BJ (cell line): ENCODE measurements at regions of chr4 and their contacts with region 1.

Region 1: DNA sequence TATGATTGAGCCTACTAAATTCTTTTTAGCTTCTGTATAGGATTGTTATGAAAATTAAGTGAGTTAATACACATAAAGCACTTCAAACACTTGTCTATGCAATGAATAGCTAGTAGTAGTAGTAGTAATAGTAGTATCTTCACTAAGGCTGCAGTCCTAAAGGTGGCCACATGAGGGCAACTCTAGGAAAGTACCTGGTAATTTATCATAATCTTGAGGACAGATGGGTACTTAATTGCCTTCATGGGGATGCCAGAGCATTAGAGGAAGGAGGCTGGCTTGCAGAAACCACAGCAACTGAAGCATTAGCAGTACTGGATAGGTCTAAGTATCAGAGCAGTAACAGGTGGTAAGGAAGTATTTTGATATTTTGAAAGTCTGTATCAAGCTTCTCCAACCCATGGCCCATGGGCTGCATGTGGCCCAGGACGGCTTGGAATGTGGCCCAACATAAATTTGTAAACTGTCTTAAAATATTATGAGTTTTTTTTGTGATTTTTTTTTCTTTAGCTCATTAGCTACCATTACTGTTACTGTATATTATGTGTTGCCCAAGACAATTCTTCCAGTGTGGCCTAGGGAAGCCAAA is 17.3 kb downstream of the NIPAL1 start:
- DNase-seq: no peak
- H3K4me3 ChIP-seq: no peak overlapping the region
- H3K27me3 ChIP-seq: no peaks in the 10 kb centered on the region
- CTCF ChIP-seq: peak; percentile 60; the same call in 1 of the 2 replicates

Region 2: GRCh38 chr4:47876784-47877546 is 157.0 kb before region 1 on chr4:
- CTCF ChIA-PET with region 1: no interaction called
- POLR2A ChIA-PET with region 1: no interaction called
- DNase-seq: no peak
- H3K4me3 ChIP-seq: no peak overlapping the region
- H3K27me3 ChIP-seq: no peaks in the 10 kb centered on the region
- CTCF ChIP-seq: no peak

Region 3: DNA sequence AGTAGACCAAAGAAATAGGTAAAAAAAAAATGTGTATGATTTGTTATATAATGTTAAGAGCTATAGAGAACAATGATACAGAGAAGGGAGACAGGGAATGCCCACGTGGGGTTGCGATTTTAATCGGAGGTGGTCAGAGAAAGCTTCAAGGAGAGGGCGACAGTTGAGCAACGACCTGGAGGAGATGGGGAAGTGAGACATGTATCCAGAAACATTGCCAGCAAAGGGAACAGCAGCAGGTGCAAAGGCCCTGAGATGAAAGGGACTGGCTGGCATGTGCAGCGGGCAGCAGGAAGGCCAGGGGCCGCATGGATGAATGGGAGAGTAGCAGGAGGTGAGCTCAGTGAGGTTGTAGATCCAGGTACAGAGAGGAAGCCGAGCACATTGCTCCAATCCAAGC is 15.6 kb after region 1 on chr4:
- CTCF ChIA-PET with region 1: interaction called, 13 read pairs
- POLR2A ChIA-PET with region 1: no interaction called
- DNase-seq: no peak
- H3K4me3 ChIP-seq: no peak overlapping the region
- H3K27me3 ChIP-seq: peaks cover 3% of the 10 kb centered on the region; the same call in 1 of the 2 replicates
- CTCF ChIP-seq: no peak